ENCODE measurements at regions of chr1 and their contacts with region 1.

Region 1: DNA sequence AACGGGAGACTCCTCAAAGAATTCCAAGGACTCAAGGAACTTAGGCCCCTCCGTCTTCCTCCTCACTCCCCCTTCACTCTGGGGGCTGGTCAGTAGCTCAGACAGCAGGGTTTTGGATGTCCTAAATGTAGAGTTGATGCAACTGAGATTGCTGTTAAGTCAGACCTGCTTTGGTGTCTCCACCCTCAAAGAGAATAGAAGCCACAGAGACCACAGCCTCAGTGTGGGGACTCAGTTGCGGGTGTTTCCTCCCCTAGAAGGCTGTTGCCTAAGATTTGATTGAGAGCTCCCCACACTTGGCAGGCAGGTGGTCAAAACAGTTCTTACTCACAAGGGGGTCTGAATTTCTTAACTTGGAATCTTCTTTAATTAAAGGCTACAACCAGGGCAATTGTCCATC is 7.6 kb downstream of the MAN1C1 start:
- DNase-seq: no peak
- H3K4me3 ChIP-seq: no peak overlapping the region
- H3K4me1 ChIP-seq: no peaks in the 10 kb centered on the region
- H3K27me3 ChIP-seq: no peaks in the 10 kb centered on the region

Region 2: DNA sequence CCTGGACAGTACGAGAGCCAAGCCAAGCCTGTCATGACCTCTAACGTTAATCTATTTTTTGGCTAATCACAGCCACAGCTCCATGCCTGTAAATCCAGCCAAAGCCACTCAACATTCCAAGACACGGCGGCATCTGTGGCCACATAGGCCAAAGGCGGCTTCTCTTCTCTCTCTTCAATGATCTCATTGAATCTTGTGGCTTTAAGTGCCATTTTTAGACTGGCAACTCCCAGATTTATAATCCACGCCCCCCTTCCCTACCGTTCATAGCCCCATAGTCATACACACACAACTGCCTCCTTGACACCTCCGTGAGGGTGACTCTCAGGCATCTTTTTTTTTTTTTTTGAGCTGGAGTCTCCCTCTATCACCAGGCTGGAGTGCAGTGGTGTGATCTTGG is 170.2 kb after region 1 on chr1:
- in situ Hi-C with region 1: loop called (anchors 5 kb)
- DNase-seq: no peak
- H3K4me3 ChIP-seq: no peak overlapping the region
- H3K4me1 ChIP-seq: no peaks in the 10 kb centered on the region; the same call in 1 of the 2 replicates
- H3K27me3 ChIP-seq: no peaks in the 10 kb centered on the region